Transverse colon (tissue), 4 donors: ENCODE measurements at regions of chr3 and their contacts with region 1.

Region 1: DNA sequence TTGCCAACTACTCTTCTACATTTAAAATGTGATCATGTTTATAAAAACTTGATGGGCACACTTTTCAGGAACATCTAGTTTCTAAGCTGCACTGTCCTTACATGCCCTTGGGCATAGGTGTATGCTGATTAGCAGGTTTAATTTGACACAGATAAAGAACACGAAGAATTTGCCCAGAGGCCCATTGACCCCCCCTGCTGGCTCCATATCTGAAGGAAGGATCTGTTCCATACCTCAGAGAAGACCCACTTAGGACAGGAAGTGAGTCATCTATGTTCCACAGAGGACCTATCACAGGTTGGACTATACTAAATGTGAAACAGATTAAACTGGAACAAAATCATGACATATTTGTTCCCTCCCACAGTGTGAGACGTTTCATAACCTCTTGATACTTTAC is 92.8 kb upstream of the LPP start:
- DNase-seq: peak; percentile 40
- H3K4me3 ChIP-seq: no peak overlapping the region
- H3K27ac ChIP-seq: no peak overlapping the region
- H3K4me1 ChIP-seq: peaks cover 0 to 5% (median 0%) of the 10 kb centered on the region in 4 donors
- H3K27me3 ChIP-seq: no peaks in the 10 kb centered on the region
- CTCF ChIP-seq: no peak
- EP300 ChIP-seq: no peak
- POLR2A ChIP-seq: no peak

Region 2: GRCh38 chr3:188148318-188148717 is 87.2 kb after region 1 on chr3:
- in situ Hi-C with region 1: no loop called
- intact Hi-C with region 1: loop called (anchors 5 kb)
- DNase-seq: no peak
- H3K4me3 ChIP-seq: no peak overlapping the region
- H3K27ac ChIP-seq: no peak overlapping the region
- H3K4me1 ChIP-seq: peaks cover 9 to 17% (median 13%) of the 10 kb centered on the region in 4 donors
- H3K27me3 ChIP-seq: no peaks in the 10 kb centered on the region
- CTCF ChIP-seq: no peak
- EP300 ChIP-seq: no peak
- POLR2A ChIP-seq: no peak

Region 3: GRCh38 chr3:188796122-188796631 is 735.0 kb after region 1 on chr3:
- in situ Hi-C with region 1: no loop called
- intact Hi-C with region 1: no loop called
- DNase-seq: peak; percentile 16
- H3K4me3 ChIP-seq: no peak overlapping the region
- H3K27ac ChIP-seq: peak overlapping the region in 3 of 4 donors; percentile 22 to 48 (median 48)
- H3K4me1 ChIP-seq: peaks cover 0 to 37% (median 6%) of the 10 kb centered on the region in 4 donors
- H3K27me3 ChIP-seq: no peaks in the 10 kb centered on the region
- CTCF ChIP-seq: no peak
- EP300 ChIP-seq: no peak
- POLR2A ChIP-seq: no peak